Activated T-helper 1 cell treated with anti-CD3 and anti-CD28 coated beads, Interleukin-12 subunit alpha, Interleukin-12 subunit beta, Interleukin-2, Interleukin-4 antibody, amounts not matched to agents 30 ng/mL and 10 ng/mL and 1 ng/mL, durations not matched to agents 14 hours and 24 hours and 36 hours (primary cell): ENCODE measurements at regions of chr15 and their contacts with region 1.

Region 1: DNA sequence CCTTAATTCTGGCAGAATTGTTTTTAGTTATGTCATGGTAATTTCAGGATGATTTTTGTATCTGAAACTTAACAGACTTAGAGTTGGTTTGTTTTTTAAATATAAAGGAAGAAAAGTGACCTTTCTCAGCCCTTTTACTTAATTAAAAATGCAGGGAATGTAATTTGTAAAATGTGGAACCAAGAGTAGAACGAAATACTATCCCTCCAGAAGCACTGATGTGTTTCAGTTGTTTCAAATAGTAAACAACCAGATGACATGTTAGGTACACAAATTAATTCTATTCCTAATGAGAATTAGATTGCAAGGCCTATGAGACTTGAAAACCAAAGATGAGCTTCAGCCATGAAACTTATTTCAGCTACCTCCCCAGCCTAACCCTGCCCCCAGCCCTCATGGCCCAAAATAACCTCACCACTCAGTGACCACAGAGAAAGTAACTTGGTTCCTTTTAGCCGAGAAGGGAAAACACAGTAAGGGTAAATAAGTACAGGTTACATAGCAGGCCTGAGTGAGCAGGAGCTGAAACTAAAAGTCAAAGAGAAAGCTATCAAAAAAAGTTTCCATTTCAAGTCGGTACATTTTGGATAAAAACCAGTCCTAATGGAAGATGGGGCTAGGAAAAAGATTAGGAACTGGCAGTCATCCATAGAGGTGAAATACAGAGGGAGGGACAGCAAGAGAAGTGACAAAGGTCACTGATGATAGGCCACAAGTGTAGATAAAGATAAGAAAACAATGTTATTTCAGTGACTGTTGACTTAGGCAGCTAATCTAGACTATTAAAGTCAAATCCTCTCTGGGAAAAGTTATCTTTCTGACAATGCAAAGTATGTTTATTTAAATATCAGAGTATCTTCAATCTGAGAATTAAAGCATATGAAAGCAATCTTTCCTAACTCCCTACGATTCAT is 23.2 kb downstream of the SENP8 start:
- DNase-seq: no peak
- H3K4me3 Mint-ChIP-seq: no peak overlapping the region
- H3K27ac Mint-ChIP-seq: no peak overlapping the region
- H3K4me1 Mint-ChIP-seq: peaks cover 8% of the 10 kb centered on the region
- H3K27me3 Mint-ChIP-seq: peaks cover 10% of the 10 kb centered on the region

Region 2: DNA sequence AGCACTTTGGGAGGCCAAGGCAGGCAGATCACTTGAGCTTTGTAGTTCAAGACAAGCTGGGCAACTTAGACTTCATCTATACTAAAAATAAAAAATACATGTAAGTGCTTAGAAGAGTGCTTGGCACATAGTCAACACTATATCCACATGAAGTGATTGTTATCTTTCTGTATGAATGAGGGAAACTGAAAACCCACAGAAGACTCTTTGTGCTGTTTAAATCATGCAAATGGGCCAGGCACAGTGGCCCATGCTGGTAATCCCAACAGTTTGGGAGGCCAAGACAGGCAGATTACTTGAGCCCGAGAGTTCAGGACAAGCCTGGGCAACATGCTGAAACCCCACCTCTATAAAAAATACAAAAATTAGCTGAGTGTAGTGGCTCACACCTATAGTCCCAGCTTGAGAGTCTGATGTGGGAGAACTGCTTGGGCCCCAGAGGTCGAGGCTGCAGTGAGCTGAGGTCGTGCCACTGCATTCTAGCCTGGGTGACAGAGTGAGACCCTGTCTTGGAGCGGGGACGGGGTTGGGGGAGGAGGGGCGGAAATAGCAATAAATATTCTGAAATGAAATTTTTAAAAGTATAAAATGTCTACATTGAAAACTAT is 201.3 kb before region 1 on chr15:
- intact Hi-C with region 1: no loop called
- DNase-seq: no peak
- H3K4me3 Mint-ChIP-seq: no peak overlapping the region
- H3K27ac Mint-ChIP-seq: no peak overlapping the region
- H3K4me1 Mint-ChIP-seq: no peaks in the 10 kb centered on the region
- H3K27me3 Mint-ChIP-seq: no peaks in the 10 kb centered on the region

Region 3: DNA sequence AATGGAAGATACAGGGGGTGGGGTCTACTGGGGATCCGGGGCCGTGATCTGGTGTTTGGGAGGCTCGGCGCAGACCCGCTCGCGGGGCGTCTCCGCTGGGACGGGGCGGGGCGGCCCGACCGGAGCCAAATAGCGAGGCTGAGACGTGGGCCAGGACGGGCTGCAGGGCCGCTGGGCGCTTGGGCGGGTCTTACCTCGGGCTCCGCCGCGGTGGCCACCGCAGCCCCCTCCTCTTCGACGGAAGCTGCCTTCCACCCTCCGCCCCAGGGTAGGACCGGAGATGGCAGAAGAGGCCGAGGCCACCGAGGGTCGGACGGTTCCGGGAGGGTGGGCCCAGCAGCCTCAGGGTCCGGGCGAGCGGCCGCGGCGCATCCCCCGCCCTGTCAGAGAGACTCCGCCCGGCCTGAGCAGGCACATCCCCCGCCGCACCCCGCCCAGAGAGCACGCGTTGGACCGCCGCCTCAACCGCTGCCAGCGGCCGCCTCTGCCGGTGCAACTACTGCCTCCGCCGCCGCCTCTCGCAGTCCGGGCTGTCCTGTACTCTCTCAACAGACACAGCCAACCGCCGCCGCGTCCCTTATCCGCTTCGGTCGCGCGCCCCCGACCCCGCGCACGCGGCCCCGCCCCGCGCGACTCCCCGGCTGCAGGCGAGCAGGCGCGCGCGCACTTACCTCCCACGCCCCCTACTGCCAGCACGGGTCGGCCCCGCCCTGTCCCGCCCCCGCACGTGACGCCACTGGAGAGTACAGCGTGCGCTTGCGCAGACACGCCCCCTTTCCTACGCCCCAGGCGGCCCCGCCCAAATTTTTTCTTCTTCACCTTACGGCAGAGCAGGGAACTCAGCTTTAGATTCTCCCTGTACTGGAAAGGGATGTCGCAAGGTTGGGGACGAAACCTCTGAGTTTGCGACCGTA is 23.7 kb before region 1 on chr15 and contains the start of gene MYO9A:
- intact Hi-C with region 1: loop called (anchors 1 kb)
- DNase-seq: peak; percentile 95
- H3K4me3 Mint-ChIP-seq: peak within 1 kb of the TSS; percentile 93
- H3K27ac Mint-ChIP-seq: peak within 1 kb of the TSS; percentile 95
- H3K4me1 Mint-ChIP-seq: peaks cover 23% of the 10 kb centered on the region
- H3K27me3 Mint-ChIP-seq: peaks cover 16% of the 10 kb centered on the region
- total RNA-seq, gene MYO9A: 15.2 and 16.4 TPM in 2 replicates

Region 4: GRCh38 chr15:72168111-72168808 is 26.8 kb after region 1 on chr15:
- intact Hi-C with region 1: no loop called
- DNase-seq: no peak
- H3K4me3 Mint-ChIP-seq: no peak overlapping the region
- H3K27ac Mint-ChIP-seq: no peak overlapping the region
- H3K4me1 Mint-ChIP-seq: peaks cover 13% of the 10 kb centered on the region
- H3K27me3 Mint-ChIP-seq: peaks cover 5% of the 10 kb centered on the region